Cardiac septum (tissue), 1 donor: ENCODE measurements at regions of chrX and their contacts with region 1.

Region 1: DNA sequence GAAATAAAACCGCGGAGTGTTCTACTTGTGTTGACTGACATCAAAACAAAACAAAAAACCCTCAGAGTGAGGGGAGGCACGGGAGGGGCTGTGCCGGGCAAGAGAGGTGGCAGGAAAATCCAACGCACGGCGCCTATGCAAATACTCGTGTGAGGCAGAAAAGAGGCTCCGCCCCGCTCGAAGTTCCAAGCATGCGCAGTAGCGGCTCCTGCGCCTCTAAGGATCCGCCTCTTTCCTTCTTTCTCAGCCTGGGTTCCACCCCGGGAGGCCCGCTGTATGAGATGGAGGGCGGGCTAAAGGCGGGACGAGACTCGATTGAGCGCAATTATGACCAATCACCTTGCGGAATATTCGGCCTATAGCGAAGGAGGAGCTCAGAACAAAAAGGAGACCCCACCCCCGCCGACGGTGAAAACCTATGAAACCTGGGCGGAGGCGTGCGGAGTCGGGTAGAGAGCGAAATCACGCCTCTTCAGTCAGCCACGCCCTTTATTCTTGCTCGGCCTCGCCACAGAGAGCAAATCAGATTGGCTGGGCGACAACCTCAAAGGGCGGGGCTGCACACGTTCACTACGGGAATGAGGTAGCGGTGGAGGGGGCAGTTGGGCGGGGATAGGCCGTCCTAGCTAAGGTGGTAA is 720 bp upstream of the CDK16 start:
- DNase-seq: peak; percentile 99

Region 2: GRCh38 chrX:46791927-46792839 is 425.6 kb before region 1 on chrX:
- intact Hi-C with region 1: no loop called
- DNase-seq: no peak

Region 3: GRCh38 chrX:47200385-47201150 is 17.2 kb before region 1 on chrX:
- intact Hi-C with region 1: loop called (anchors 2 kb)
- DNase-seq: no peak

Region 4: DNA sequence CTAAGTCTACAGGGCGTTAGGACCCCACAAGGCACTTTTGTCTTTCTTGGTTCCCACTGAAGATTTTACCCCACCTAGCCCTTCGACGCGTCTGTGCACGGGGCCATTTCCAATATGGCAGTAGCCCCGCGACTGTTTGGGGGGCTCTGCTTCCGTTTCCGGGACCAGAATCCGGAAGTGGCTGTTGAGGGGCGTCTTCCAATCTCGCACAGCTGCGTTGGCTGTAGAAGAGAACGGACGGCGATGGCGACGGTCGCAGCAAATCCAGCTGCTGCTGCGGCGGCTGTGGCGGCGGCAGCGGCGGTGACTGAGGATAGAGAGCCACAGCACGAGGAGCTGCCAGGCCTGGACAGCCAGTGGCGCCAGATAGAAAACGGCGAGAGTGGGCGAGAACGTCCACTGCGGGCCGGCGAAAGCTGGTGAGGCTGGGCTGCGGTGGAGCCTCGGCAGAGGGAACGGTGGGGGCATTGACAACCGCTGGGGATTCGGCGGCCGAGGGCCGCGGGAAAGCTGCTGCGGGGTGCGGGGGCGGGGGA is 15.1 kb after region 1 on chrX and contains the start of gene USP11:
- intact Hi-C with region 1: loop called (anchors 1 kb)
- DNase-seq: no peak
- total RNA-seq, gene USP11: 64.9 TPM

Region 5: DNA sequence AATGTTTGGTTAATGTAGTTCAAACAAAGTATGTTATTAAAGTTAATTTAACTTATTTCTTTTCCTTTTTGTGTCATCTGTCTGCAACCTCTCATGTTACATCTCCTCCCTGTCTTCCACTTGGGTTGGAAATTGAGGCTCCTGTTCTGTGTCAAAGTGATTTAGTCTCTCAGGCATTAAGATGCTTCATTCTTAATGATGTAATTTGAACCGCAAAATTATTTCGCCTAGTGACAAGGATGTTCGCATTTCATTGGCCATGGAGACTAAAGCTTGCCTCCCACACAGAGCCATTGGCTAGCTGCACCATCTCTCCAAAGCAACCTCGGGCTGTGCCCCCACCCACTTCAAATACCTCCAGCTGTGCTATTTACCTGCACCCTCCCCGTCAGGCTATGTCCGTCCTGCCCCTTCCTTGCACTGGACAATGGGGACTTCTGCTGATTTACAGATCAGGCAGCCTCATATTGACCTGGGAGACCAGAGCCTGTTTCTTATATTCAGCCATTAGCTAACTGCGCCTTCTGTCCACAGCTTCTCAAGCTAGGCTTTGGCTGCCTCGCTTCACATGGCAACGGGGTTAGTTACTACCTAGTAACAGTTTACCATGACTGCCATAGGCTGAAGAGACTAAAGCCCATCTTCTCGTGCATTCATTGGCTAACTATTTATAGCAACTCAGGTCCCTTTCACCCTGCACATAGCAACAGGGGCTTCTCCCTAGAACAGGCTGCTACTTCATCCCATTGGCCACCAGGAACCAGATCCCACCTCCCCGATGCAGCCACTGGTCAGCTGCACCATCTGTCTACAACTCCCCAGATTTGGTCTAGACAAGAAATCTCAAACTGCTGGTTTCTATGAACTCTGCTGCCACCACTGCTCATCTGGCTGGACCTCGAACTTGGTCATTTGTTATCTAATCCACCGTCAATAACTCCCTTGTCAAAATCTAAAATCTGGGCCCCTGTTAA is 144.1 kb after region 1 on chrX:
- intact Hi-C with region 1: loop called (anchors 10 kb)
- DNase-seq: peak; percentile 80